HEK293 (cell line): ENCODE measurements at regions of chr10 and their contacts with region 1.

Region 1: DNA sequence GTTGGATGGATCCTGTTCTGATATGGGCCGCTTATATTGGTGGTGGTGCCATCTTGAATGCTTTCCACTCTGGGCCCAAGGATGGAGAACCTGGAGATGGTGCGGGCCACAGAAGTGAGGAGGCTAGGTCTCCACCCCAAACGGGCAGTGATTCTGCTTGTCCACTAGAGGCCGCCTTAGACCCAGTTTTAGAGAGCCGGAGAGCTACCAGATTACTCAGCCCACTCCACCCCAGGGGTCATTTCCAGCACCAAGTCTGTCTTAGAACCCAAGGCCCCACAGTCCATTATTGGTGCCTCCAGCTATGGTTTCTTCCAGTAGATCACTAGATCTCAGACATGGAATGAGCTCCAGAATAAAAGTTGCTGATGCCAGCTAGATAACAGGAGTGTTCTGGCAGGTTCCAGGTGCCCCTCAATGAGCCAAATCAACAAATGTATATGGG is 11.8 kb upstream of the CAMK2G start:
- H3K4me3 ChIP-seq: no peak overlapping the region
- H3K27ac ChIP-seq: no peak overlapping the region
- H3K4me1 ChIP-seq: peaks cover 11% of the 10 kb centered on the region
- CTCF ChIP-seq: peak; percentile 92

Region 2: GRCh38 chr10:73899423-73899822 is 13.3 kb after region 1 on chr10:
- CTCF ChIA-PET with region 1: interaction called, 41 read pairs
- POLR2A ChIA-PET with region 1: no interaction called
- H3K4me3 ChIP-seq: no peak overlapping the region
- H3K27ac ChIP-seq: no peak overlapping the region
- H3K4me1 ChIP-seq: no peaks in the 10 kb centered on the region
- CTCF ChIP-seq: no peak

Region 3: DNA sequence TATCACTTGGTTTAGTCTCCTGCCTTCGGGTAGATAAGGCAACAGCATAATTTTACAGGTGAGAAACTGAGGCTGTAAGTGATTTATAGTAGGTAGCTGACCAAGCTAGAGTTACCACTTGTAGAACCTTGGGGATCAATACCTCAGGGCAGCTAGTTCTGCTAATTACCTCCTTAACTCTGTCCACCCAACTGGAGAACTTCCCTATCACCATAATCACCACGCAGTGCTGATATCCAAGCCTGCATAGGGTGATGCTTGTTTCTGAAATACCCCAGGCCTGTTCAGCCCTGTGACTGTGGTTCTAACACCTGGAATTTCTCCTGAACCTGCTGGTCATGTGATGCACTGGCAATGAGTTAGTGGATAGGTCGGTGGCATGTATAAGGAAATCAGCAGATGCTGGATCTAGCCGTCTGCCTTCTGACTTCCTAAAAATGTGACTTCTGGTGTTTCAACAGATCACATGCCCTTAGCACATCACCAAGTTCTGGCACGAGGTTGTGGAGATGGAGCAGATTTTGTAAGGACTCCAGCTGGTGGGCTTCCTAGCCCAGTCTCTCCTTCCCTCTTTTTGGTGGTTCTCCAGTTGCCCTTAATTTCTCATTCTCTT is 40.2 kb after region 1 on chr10:
- CTCF ChIA-PET with region 1: interaction called, 15 read pairs
- POLR2A ChIA-PET with region 1: no interaction called
- H3K4me3 ChIP-seq: no peak overlapping the region
- H3K27ac ChIP-seq: no peak overlapping the region
- H3K4me1 ChIP-seq: no peaks in the 10 kb centered on the region
- CTCF ChIP-seq: no peak

Region 4: DNA sequence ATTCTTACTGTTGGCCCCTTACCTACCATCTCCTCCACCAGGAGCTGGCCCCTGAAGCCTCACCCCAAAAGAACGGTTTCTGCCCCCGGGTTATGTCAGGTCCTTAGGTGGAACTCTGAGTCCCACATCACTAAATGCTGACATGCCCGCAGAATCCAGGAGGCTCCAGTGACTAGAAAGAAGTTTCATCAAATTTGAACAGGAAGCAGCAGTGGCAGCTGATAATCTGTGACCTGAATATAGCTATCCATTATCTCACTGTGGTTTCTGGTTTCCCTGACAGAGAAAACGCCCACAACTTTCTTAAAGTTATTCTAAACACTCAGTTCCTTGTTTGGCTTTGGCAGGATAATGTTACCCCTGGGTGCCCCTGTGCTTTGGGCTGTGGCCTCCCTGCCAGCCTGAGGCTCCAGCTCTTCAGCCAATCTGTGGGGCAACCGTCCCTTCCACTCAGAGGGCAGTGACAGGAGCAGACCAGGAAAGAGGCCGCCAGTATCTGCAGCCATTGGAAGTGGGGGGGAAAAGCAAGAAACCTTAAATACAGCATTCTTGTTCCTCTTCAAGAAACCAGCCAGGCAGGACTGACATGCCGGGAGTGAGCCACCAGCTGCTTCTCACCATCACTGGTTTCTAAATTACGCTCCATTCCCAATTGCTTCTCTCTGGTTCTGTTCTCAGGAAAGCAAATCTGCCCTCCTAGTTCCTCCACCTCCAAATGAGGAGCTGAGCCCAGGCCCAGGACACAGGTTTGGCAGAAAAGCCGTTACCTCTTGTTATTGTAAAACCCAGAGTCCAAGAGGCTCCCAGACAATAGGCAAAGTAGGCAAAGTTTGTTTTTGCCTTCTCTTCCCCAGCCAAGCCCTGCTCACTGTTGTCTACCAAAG is 70.6 kb after region 1 on chr10:
- CTCF ChIA-PET with region 1: interaction called, 33 read pairs
- POLR2A ChIA-PET with region 1: no interaction called
- H3K4me3 ChIP-seq: no peak overlapping the region
- H3K27ac ChIP-seq: peak overlapping the region; percentile 56
- H3K4me1 ChIP-seq: peaks cover 10% of the 10 kb centered on the region; the same call in 1 of the 2 replicates
- CTCF ChIP-seq: no peak

Region 5: DNA sequence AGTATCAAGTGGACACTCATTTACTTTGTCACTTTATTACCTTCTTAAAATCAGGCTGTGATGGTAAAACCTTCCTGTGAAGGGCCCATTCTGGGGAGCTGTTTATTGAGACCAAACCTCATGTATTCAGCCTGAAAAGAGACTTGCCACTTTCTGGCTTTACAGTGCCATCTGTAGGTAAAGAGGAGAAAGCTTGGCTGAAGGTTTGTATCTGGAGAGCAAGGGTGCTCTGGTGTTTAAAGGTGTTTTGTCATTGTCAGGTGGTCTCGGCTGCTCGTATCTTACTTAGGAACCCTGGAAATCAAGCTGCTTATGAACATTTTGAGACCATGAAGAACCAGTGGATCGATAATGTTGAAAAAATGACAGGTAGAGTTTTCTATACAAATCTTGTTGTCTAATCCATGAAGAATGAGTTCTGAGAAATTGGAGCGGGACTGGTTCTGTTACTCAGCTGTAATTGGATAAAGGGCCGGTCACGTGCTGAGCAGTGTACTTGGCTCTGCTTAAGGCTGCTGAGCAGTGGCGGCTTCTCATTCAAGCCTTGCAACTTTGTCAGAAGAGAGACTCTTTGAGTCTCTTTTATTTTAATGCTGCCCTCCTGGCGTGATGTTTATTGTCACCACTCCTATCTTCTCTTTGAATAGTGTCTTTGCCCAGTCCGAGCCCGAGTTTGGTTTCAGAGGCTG is 217.6 kb after region 1 on chr10:
- CTCF ChIA-PET with region 1: interaction called, 37 read pairs
- POLR2A ChIA-PET with region 1: no interaction called
- H3K4me3 ChIP-seq: no peak overlapping the region
- H3K27ac ChIP-seq: no peak overlapping the region
- H3K4me1 ChIP-seq: no peaks in the 10 kb centered on the region
- CTCF ChIP-seq: 0 out of 2 replicates have a peak, but pooled peaks have one; percentile 9